CD8-positive, alpha-beta memory T cell (primary cell): ENCODE measurements at regions of chr1 and their contacts with region 1.

Region 1: DNA sequence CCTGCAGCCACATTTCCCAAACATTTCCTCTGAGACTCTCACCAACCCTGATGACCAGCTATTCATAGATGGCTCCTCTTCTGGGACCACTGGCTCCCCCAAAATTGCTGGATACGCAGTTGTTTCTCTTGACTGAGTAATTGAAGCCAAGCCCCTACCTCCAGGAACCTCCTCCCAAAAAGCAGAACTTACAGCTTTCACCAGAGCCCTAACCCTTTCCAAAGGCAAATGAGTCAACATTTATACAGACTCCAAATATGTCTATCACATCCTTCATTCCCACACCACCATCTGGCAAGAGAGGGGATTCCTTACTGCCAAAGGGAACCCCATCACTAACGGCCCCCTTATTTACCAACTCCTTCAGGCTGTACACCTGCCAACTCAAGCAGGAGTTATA is 20.3 kb upstream of the CA6 start:
- DNase-seq: no peak
- H3K4me3 ChIP-seq: peak overlapping the region; percentile 46
- H3K4me3 Mint-ChIP-seq: no peak overlapping the region
- H3K27ac ChIP-seq: no peak overlapping the region
- H3K27ac Mint-ChIP-seq: no peak overlapping the region
- H3K4me1 ChIP-seq: peaks cover 60% of the 10 kb centered on the region
- H3K4me1 Mint-ChIP-seq: peaks cover 16 to 26% (median 21%) of the 10 kb centered on the region in 3 donors
- H3K27me3 ChIP-seq: no peaks in the 10 kb centered on the region
- H3K27me3 Mint-ChIP-seq: no peaks in the 10 kb centered on the region

Region 2: GRCh38 chr1:8903908-8904650 is 21.3 kb before region 1 on chr1:
- CTCF ChIA-PET with region 1: no interaction called
- POLR2A ChIA-PET with region 1: no interaction called
- DNase-seq: no peak
- H3K4me3 ChIP-seq: no peak overlapping the region
- H3K4me3 Mint-ChIP-seq: no peak overlapping the region
- H3K27ac ChIP-seq: no peak overlapping the region
- H3K27ac Mint-ChIP-seq: peak overlapping the region in 3 of 8 donors; percentile 11 to 58 (median 23)
- H3K4me1 ChIP-seq: peaks cover 17% of the 10 kb centered on the region
- H3K4me1 Mint-ChIP-seq: peaks cover 11 to 25% (median 21%) of the 10 kb centered on the region in 3 donors
- H3K27me3 ChIP-seq: no peaks in the 10 kb centered on the region
- H3K27me3 Mint-ChIP-seq: no peaks in the 10 kb centered on the region

Region 3: DNA sequence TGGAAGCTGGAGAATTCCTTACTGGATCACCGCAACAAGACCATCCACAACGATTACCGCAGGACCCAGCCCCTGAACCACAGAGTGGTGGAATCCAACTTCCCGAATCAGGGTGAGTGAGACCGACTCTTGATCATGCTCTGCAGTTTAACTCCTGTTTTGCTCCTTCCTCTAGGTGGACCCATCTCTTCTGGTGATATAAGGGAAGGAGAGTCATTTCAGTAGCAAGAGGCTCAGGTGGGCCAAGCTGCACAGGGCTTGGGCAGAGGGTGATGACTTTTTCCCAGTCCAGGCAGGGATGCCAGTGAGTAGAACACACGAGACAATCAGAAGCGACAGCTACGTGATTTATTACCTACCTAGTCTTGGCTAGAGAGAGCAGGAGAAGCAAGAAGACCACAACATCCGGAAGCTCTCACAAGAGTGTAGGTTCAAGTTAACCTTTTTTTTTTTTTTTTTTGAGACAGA is 45.5 kb after region 1 on chr1:
- CTCF ChIA-PET with region 1: interaction called, 3 read pairs
- POLR2A ChIA-PET with region 1: interaction called, 10 read pairs
- DNase-seq: peak in 3 of 5 donors; percentile 49 to 82 (median 56)
- H3K4me3 ChIP-seq: peak overlapping the region; percentile 97
- H3K4me3 Mint-ChIP-seq: peak overlapping the region; percentile 70 to 98 (median 92)
- H3K27ac ChIP-seq: peak overlapping the region; percentile 27
- H3K27ac Mint-ChIP-seq: peak overlapping the region; percentile 14 to 97 (median 92)
- H3K4me1 ChIP-seq: peaks cover 19% of the 10 kb centered on the region
- H3K4me1 Mint-ChIP-seq: peaks cover 21 to 49% (median 45%) of the 10 kb centered on the region in 3 donors
- H3K27me3 ChIP-seq: no peaks in the 10 kb centered on the region
- H3K27me3 Mint-ChIP-seq: peaks cover 0 to 1% of the 10 kb centered on the region in 2 donors